ENCODE measurements at regions of chr2 and their contacts with region 1.

Region 1: GRCh38 chr2:202703091-202703490 is 68.3 kb downstream of the FAM117B start:
- DNase-seq: no peak
- H3K4me3 Mint-ChIP-seq: no peak overlapping the region
- H3K27ac Mint-ChIP-seq: peak overlapping the region; percentile 0
- H3K4me1 Mint-ChIP-seq: peaks cover 60% of the 10 kb centered on the region
- H3K27me3 Mint-ChIP-seq: no peaks in the 10 kb centered on the region

Region 2: GRCh38 chr2:202671317-202672035 is 31.6 kb before region 1 on chr2:
- CTCF ChIA-PET with region 1: interaction called, 4 read pairs
- POLR2A ChIA-PET with region 1: no interaction called
- intact Hi-C with region 1: loop called (anchors 5 kb)
- DNase-seq: no peak
- H3K4me3 Mint-ChIP-seq: no peak overlapping the region
- H3K27ac Mint-ChIP-seq: no peak overlapping the region
- H3K4me1 Mint-ChIP-seq: peaks cover 63% of the 10 kb centered on the region
- H3K27me3 Mint-ChIP-seq: no peaks in the 10 kb centered on the region

Measured in activated CD4-positive, alpha-beta memory T cell treated with anti-CD3 and anti-CD28 coated beads for 36 hours (primary cell).